Aorta (tissue), 5 donors: ENCODE measurements at regions of chr2 and their contacts with region 1.

Region 1: DNA sequence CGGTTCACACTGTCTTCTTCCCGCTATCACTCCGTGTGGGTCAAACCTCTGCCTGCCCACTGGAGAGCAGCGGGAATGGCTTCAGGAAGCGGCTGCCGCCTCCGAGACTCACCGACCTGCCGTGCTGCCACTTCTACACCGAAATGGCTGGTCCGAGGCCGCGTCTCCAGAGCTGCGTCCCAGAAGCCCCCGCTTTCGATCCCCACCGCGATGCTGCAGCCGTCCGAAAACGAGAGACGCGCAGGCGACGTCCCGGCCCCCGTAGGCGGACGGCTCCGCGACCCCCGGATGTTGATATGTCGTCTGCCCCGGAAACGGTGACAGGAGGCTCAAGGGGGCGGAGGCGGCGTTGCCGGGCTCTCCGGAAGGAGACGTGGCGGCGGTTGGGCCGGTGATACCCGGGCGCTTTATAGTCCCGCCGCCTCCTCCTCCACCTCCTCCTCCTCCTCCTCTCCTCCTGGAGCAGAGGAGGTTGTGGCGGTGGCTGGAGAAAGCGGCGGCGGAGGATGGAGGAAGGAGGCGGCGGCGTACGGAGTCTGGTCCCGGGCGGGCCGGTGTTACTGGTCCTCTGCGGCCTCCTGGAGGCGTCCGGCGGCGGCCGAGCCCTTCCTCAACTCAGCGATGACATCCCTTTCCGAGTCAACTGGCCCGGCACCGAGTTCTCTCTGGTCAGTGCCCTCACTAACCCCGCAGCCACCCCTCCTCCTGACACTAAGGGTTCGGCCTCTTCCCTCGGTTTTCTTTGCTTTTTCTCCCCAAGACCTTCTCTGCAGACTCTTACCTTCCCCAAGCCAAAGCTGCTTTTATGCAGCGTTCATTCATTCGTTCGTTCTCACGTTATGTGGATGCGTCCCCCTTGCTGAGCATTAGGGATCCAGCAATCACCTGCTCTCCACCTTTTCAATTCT is at the starts of genes ASB3 and ERLEC1:
- DNase-seq: peak; percentile 95 to 97
- ATAC-seq: peak; percentile 98
- H3K4me3 ChIP-seq: peak within 1 kb of the TSS; percentile 70 to 83
- H3K27ac ChIP-seq: peak within 1 kb of the TSS in 1 of 2 donors; percentile 68
- H3K4me1 ChIP-seq: peaks cover 0 to 6% of the 10 kb centered on the region in 2 donors
- H3K27me3 ChIP-seq: no peaks in the 10 kb centered on the region
- total RNA-seq, gene ASB3: 14.4 to 26.7 TPM
- total RNA-seq, gene ERLEC1: 54.3 to 55.0 TPM

Region 2: GRCh38 chr2:53690876-53691275 is 96.1 kb before region 1 on chr2:
- intact Hi-C with region 1: no loop called
- DNase-seq: no peak
- ATAC-seq: no peak
- H3K4me3 ChIP-seq: no peak overlapping the region
- H3K27ac ChIP-seq: no peak overlapping the region
- H3K4me1 ChIP-seq: no peaks in the 10 kb centered on the region
- H3K27me3 ChIP-seq: no peaks in the 10 kb centered on the region

Region 3: DNA sequence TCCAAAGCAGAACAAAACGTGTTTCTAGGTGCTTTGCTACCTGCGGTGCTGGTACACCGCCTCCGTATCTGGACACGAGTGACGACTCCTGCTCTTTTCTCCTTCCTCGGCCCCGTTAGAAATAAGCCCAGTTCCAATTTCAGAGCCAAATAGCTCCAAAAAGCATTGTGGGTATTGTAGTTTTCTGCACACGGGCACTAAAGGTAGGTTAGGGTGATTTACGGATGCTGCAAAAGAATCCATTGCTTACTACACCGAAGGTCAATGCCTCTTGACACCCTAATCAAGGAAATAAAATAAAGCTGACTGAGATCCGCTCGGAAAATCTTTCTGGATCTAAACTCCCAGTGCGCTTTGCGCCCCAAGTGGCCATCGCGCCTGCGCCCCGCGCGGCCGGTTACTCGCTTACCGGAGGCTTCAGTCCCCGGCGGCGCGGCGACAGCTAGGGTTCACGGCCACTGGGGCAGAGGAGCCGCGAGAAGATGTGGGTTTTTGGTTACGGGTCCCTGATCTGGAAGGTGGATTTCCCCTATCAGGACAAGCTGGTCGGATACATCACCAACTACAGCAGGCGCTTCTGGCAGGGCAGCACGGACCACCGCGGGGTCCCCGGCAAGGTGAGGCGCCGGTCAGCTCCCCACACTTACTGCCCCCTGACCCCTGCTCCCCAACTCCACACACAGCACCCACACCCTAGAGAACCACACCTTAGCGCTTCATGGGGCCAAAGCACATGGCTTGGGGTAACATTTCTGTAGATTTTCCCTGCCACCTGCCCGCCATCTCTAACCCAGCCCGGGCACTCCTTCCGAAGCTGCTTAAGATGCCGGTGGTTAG is 19.3 kb before region 1 on chr2 and contains the start of gene CHAC2:
- intact Hi-C with region 1: loop called in 1 of 2 experiments (anchors 2 kb)
- DNase-seq: peak; percentile 89 to 96
- ATAC-seq: peak; percentile 96
- H3K4me3 ChIP-seq: peak within 1 kb of the TSS; percentile 78 to 84
- H3K27ac ChIP-seq: peak within 1 kb of the TSS; percentile 22 to 76
- H3K4me1 ChIP-seq: peaks cover 0 to 4% of the 10 kb centered on the region in 2 donors
- H3K27me3 ChIP-seq: no peaks in the 10 kb centered on the region
- total RNA-seq, gene CHAC2: 0.75 to 1.3 TPM